GM18951 (cell line): ENCODE measurements at regions of chr14 and their contacts with region 1.

Region 1: DNA sequence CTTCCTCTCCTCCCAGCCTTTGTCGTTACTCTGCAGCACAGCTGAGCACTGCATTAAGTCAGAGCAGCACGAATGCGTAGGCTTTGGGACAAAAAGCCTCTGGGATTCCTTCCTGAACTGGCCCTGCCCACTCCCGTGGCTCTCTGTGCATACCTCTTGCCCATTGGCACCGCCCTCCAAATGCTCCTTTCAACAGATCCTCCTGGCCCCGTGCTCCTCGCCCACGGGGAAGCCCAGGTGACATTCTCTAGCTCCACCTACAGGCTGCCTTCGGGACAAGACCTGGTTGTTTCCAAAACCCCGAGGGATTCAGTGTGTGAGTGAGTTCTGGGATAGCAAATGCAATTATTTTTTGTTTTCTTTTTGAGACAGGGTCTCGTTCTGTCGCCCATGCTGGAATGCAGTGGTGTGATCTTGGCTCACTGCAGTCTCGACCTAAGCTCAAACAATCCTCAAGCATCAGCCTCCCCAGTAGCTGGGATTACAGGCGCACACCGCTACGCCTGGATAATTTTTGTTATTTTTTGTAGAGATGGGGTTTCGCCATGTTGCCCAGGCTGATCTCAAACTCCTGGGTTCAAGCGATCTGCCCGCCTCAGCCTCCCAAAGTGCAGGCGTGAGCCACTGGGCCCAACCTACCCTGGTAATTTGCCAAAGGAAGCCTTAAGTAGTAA is 17.9 kb upstream of the TDRD9 start:
- POLR2A ChIP-seq: no peak

Region 2: GRCh38 chr14:103808403-103809001 is 101.9 kb before region 1 on chr14:
- in situ Hi-C with region 1: loop called (anchors 10 kb)
- POLR2A ChIP-seq: no peak

Region 3: GRCh38 chr14:103994535-103995182 is 84.3 kb after region 1 on chr14:
- in situ Hi-C with region 1: no loop called
- POLR2A ChIP-seq: no peak

Region 4: DNA sequence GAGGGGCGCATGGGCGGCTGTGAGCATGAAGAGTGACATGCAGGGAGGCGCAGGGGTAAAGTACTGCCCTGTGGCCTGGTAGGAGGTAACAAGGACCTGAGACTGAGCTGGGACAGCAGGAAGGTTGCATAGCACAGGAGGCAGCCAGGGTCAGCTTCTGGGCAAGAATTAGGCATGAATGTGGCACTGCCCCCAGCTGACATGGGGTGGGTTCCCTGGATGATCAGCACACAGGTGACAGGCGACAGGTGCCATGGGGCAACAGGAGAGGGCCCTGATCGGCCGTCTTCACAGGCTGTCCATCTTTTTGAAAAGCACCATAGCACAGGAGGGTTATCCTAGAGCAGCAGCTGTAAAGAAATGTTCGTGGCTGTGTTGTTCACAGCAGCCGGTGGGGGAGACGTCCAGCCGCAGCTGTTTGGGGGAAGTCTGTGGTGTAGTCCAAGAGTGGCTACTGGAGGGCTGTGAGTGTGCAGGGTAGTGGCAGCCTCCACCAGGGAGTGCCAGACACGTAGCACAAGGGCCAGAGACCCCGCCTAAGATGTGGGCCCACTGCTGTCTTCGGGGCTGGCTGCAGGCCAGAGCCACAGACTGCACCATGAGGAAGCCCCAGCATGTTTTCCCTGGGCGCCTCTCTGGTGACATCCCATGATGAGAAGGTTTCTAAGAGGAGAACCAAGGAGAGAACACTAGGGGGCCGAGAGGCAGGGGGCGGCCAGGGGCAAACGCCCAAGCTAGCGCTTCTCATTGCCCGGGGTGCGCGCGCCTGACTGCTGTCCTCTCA is 1083.6 kb after region 1 on chr14:
- in situ Hi-C with region 1: no loop called
- POLR2A ChIP-seq: no peak